Psoas muscle (tissue), 8 donors: ENCODE measurements at regions of chr3 and their contacts with region 1.

Region 1: GRCh38 chr3:121786485-121786884 is 36.9 kb upstream of the GOLGB1 start:
- DNase-seq: no peak
- ATAC-seq: no peak
- H3K4me3 ChIP-seq: no peak overlapping the region
- H3K27ac ChIP-seq: no peak overlapping the region
- H3K4me1 ChIP-seq: no peaks in the 10 kb centered on the region
- H3K27me3 ChIP-seq: no peaks in the 10 kb centered on the region
- CTCF ChIP-seq: no peak

Region 2: GRCh38 chr3:121724130-121724529 is 62.4 kb before region 1 on chr3:
- intact Hi-C with region 1: loop called in 1 of 2 experiments (anchors 10 kb)
- DNase-seq: no peak
- ATAC-seq: no peak
- H3K4me3 ChIP-seq: no peak overlapping the region
- H3K27ac ChIP-seq: no peak overlapping the region
- H3K4me1 ChIP-seq: no peaks in the 10 kb centered on the region
- H3K27me3 ChIP-seq: no peaks in the 10 kb centered on the region
- CTCF ChIP-seq: no peak

Region 3: DNA sequence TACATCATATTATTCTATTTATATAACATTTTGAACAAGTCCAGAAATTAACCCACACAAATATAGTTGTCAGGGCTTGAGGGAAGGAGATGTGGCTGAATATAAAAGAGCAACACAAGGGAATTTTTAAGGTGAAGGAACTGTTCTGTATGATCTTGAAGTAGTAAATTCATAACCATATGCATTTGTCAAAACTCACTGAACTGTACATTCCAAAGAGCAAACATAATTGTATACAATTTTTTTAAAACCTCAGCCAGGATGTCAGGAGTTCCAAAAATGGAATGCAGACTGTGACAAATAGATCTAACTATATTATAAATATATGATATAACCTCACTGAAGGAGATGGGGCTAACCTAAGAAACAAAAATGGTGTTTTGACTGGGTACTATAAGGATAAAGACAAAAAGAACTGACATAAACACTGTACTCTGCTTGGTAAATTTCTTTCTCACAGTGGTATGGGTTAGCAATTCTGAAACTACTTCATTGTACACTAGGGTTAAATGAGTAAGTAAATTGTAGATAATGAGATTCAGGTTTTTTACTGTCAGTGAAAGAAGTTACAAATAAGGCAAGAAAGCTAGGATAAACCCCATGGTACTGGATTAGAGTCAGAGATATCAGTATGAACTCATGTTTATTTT is 51.3 kb before region 1 on chr3:
- intact Hi-C with region 1: no loop called
- DNase-seq: no peak
- ATAC-seq: no peak
- H3K4me3 ChIP-seq: no peak overlapping the region
- H3K27ac ChIP-seq: no peak overlapping the region
- H3K4me1 ChIP-seq: no peaks in the 10 kb centered on the region
- H3K27me3 ChIP-seq: no peaks in the 10 kb centered on the region
- CTCF ChIP-seq: no peak